PC-9 (cell line): ENCODE measurements at regions of chr22 and their contacts with region 1.

Region 1: GRCh38 chr22:41381329-41382097 is at the start of gene TEF:
- DNase-seq: peak; percentile 94 to 98
- H3K4me3 ChIP-seq: peak within 1 kb of the TSS; percentile 85
- H3K27ac ChIP-seq: peak within 1 kb of the TSS; percentile 96
- H3K4me1 ChIP-seq: peaks cover 21% of the 10 kb centered on the region
- H3K27me3 ChIP-seq: no peaks in the 10 kb centered on the region
- CTCF ChIP-seq: no peak
- total RNA-seq, gene TEF: 19.4 and 28.2 TPM in 2 replicates

Region 2: DNA sequence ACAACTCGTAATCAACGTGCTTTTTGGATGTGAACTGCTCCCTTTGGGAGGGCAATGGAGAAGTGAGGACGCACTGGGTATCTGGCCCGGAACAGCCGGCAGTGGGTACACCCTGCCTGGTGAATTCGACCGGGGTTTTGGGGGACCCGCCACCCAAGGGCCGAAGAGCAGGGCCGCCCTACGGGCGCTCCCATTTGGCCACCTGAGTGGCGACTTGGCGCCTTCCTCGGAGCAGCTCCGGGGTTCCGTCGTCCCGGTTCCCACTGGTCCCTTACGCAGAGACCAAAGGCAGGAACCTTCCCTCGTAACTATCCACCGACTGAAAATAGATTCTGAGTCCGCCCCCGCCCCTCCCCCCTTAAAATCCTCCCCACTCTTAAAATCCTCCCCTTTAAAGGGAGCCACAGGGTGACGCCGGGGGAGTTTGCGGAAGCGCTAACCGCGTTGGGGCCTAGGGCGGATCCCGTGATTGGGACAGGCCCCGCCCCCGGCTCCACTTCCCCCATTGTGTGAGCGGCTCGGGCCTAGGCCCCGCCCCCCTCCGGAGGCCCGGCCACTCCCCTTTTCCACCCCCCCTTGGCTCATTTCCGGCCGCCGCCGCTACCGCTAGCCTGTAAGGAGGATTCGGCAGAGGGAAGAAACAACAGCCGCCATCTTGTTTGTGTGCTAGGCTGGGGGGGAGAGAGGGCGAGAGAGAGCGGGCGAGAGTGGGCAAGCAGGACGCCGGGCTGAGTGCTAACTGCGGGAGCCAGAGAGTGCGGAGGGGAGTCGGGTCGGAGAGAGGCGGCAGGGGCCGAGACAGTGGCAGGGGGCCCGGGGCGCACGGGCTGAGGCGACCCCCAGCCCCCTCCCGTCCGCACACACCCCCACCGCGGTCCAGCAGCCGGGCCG is 290.1 kb before region 1 on chr22:
- CTCF ChIA-PET with region 1: no interaction called
- POLR2A ChIA-PET with region 1: interaction called, 8 read pairs
- intact Hi-C with region 1: loop called (anchors 2 kb)
- DNase-seq: peak; percentile 93 to 98
- H3K4me3 ChIP-seq: peak overlapping the region; percentile 92
- H3K27ac ChIP-seq: peak overlapping the region; percentile 97
- H3K4me1 ChIP-seq: peaks cover 28% of the 10 kb centered on the region
- H3K27me3 ChIP-seq: no peaks in the 10 kb centered on the region
- CTCF ChIP-seq: no peak

Region 3: GRCh38 chr22:41285820-41286638 is 95.5 kb before region 1 on chr22 and contains the start of gene RANGAP1:
- CTCF ChIA-PET with region 1: no interaction called
- POLR2A ChIA-PET with region 1: interaction called, 8 read pairs
- intact Hi-C with region 1: loop called (anchors 5 kb)
- DNase-seq: peak; percentile 98
- H3K4me3 ChIP-seq: peak within 1 kb of the TSS; percentile 99
- H3K27ac ChIP-seq: peak within 1 kb of the TSS; percentile 93
- H3K4me1 ChIP-seq: peaks cover 58% of the 10 kb centered on the region
- H3K27me3 ChIP-seq: no peaks in the 10 kb centered on the region
- CTCF ChIP-seq: 0 out of 2 replicates have a peak, but pooled peaks have one; percentile 20
- total RNA-seq, gene RANGAP1: 142 and 160 TPM in 2 replicates

Region 4: DNA sequence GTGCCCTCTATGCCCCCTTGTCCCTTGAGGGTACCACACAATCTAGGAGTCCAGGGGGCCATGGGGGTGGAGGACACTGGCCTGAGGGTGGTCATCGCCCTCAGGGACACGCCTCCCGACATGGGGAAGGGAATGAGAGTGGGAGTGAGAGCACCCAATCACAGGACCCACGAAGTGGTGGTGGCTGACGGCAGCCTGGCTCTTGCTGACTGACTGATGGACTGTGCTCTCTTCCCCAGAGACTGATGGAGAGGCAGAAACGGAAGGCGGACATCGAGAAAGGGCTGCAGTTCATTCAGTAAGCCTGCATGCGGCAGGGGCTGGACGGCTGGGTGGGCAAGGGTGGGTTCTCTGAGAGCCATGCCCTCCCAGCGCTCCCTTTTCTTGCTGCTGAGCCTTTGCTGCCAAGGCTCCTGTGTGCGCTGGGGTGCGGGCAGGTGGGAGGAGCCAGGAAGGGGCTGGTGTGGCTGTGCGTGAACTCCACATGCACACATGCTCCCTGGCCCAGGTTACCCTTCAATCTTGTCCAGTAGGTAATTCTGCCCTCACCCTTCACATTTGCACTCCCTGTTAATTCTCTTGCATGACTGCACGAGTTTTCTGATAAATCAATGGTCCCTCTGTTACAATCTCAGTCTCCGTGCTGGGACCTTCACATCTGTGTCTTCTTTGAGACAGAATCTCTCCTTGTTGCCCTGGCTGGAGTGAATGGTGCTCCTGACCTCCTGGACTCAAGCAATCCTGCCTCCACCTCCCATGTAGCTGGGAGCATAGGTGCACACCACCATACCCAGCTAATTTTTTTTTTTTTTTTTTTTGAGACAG is 60.9 kb before region 1 on chr22:
- CTCF ChIA-PET with region 1: no interaction called
- POLR2A ChIA-PET with region 1: interaction called, 11 read pairs
- intact Hi-C with region 1: no loop called
- DNase-seq: no peak
- H3K4me3 ChIP-seq: no peak overlapping the region
- H3K27ac ChIP-seq: no peak overlapping the region
- H3K4me1 ChIP-seq: no peaks in the 10 kb centered on the region
- H3K27me3 ChIP-seq: no peaks in the 10 kb centered on the region
- CTCF ChIP-seq: no peak

Region 5: GRCh38 chr22:41367039-41367679 is 14.4 kb before region 1 on chr22:
- CTCF ChIA-PET with region 1: interaction called, 10 read pairs
- POLR2A ChIA-PET with region 1: interaction called, 37 read pairs
- intact Hi-C with region 1: loop called (anchors 1 kb)
- DNase-seq: peak; percentile 85 to 98
- H3K4me3 ChIP-seq: no peak overlapping the region; the same call in 1 of the 2 replicates
- H3K27ac ChIP-seq: no peak overlapping the region
- H3K4me1 ChIP-seq: peaks cover 16% of the 10 kb centered on the region
- H3K27me3 ChIP-seq: no peaks in the 10 kb centered on the region
- CTCF ChIP-seq: no peak

Region 6: GRCh38 chr22:41418737-41419136 is 37.2 kb after region 1 on chr22:
- CTCF ChIA-PET with region 1: no interaction called
- POLR2A ChIA-PET with region 1: no interaction called
- intact Hi-C with region 1: no loop called
- DNase-seq: no peak
- H3K4me3 ChIP-seq: no peak overlapping the region
- H3K27ac ChIP-seq: no peak overlapping the region
- H3K4me1 ChIP-seq: 0 out of 2 replicates have a peak, but pooled peaks cover 8% of the 10 kb centered on the region
- H3K27me3 ChIP-seq: no peaks in the 10 kb centered on the region
- CTCF ChIP-seq: no peak

Region 7: DNA sequence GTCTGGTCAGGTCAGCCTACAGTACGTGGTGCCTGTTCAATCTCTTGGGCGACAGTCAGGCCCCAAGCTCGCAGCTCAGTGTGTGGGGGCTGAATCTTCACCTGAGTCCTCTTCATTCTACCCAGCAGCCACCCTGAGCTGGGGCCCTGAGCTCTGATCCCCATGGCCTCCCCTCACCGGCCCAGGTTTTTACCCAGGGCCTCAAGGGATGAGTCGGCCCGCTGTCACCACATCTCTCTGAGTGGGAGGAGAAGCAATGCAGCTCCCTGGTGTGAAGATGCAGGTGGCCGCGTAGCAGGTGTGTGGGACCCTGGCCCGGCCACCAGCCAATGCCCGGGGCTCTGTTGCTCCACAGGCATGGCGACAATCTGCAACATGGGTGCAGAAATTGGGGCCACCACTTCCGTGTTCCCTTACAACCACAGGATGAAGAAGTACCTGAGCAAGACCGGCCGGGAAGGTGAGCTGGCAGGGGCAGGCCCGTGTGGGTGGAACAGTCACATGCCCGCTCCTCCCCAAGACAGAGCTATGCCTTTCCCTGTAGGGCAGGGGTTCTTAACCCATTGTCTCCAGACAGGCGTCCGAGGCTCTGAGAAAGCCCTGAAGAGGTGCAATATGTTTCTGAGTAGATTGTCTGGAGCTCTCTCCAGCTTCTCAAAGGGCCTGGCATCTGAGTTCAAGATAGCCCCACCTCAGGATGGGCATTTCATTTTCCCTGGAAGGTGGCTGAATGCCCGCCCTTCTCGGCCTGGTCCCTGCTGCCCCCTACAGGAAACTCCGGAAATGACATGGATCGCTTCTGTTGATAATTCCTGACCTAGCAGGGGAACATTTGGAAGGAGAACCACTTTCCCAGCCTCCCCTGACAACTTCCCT is 135.9 kb after region 1 on chr22:
- CTCF ChIA-PET with region 1: interaction called, 3 read pairs
- POLR2A ChIA-PET with region 1: interaction called, 23 read pairs
- intact Hi-C with region 1: no loop called
- DNase-seq: peak; percentile 53 to 75
- H3K4me3 ChIP-seq: no peak overlapping the region
- H3K27ac ChIP-seq: peak overlapping the region; percentile 9; the same call in 1 of the 2 replicates
- H3K4me1 ChIP-seq: peaks cover 18% of the 10 kb centered on the region
- H3K27me3 ChIP-seq: no peaks in the 10 kb centered on the region
- CTCF ChIP-seq: peak; percentile 99